CD4-positive, alpha-beta memory T cell (primary cell): ENCODE measurements at regions of chr10 and their contacts with region 1.

Region 1: DNA sequence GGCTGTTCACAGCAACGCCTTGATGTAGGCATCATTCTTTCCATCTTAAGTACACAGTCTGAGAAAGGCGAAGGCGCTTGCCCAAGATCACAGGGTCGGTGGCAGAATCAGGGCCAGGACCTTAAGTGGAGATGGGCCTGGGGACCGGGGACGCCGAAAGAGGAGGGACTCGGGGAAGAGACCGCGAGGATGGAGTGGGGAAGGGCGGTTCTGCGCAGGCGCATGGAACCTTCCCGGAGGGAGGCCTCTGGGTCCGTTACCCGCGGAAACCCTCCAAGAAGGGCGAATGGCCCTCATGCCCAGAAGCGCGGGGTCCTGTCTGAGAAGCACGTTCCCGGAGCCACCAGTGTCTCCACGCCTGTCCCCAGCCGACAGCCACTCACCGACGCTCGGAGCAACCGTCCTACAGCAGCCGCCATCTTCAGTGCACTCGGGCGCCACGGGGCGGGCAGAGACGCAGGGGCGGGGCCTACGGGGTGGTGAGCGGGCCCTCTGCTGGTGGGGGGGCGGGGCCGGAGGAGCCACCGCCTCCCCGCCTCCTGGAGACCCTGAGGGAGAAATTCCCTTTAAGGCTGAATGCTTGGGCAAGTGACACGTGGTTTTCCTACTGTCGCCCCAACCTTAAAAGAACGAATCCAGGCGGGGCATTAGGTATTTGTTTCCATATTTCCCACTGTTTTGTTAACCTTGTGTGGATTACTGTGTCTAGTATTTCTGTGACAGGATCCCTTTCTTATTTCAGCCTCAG is at the start of gene PRDX3:
- DNase-seq: peak; percentile 89 to 92 (median 89)
- H3K4me3 ChIP-seq: peak within 1 kb of the TSS; percentile 96 to 100
- H3K4me3 Mint-ChIP-seq: peak within 1 kb of the TSS; percentile 89 to 99 (median 96)
- H3K27ac ChIP-seq: peak within 1 kb of the TSS; percentile 81
- H3K27ac Mint-ChIP-seq: peak within 1 kb of the TSS; percentile 85 to 98 (median 96)
- H3K4me1 ChIP-seq: peaks cover 44% of the 10 kb centered on the region
- H3K4me1 Mint-ChIP-seq: peaks cover 16 to 51% (median 34%) of the 10 kb centered on the region in 4 donors
- H3K27me3 ChIP-seq: no peaks in the 10 kb centered on the region
- H3K27me3 Mint-ChIP-seq: no peaks in the 10 kb centered on the region
- total RNA-seq, gene PRDX3: 34.3 to 38.2 TPM

Region 2: DNA sequence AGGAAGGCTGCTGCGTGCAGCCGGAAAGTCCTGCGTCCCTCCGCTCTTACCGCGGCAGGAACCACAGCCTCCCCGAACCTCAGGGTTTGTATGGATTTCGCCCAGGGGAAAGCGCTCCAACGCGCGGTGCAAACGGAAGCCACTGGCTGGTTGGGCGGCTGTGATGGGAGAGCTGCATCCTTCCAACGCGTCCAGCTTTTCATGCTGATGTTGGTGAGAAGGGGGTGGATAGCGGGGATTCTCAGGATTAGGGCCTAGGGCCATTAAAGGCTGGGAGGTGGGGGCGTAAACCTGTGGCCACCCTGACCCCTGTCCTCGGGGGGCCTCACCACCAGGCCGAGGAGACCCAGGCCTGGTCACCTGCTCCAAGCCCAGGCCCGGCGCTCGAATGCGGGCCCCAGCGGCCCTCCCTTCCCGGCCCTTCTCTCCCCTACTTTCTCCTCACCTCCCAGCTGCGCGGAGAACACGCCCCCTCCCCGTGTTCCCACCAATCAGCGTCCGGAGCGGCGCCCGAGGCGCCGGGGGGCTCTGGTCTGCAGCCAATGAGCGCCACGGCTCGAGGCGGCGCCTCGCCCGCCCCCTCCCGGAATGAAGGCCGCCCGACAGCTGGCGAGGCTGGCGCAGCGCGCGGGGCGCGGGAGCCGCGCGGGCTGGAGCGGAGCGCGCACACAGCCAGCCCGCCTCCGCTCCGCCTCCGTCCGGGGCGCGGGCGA is 149.5 kb before region 1 on chr10:
- CTCF ChIA-PET with region 1: no interaction called
- POLR2A ChIA-PET with region 1: no interaction called
- intact Hi-C with region 1: loop called (anchors 5 kb)
- DNase-seq: peak; percentile 69 to 84 (median 73)
- H3K4me3 ChIP-seq: peak overlapping the region in 1 of 2 donors; percentile 28
- H3K4me3 Mint-ChIP-seq: peak overlapping the region; percentile 78 to 85 (median 80)
- H3K27ac ChIP-seq: no peak overlapping the region
- H3K27ac Mint-ChIP-seq: peak overlapping the region in 3 of 7 donors; percentile 64 to 73 (median 72)
- H3K4me1 ChIP-seq: peaks cover 7% of the 10 kb centered on the region
- H3K4me1 Mint-ChIP-seq: peaks cover 6 to 30% (median 15%) of the 10 kb centered on the region in 4 donors
- H3K27me3 ChIP-seq: no peaks in the 10 kb centered on the region
- H3K27me3 Mint-ChIP-seq: no peaks in the 10 kb centered on the region

Region 3: GRCh38 chr10:119131512-119132240 is 46.9 kb before region 1 on chr10:
- CTCF ChIA-PET with region 1: no interaction called
- POLR2A ChIA-PET with region 1: interaction called, 3 read pairs
- intact Hi-C with region 1: loop called (anchors 5 kb)
- DNase-seq: peak; percentile 42 to 57 (median 50)
- H3K4me3 ChIP-seq: peak overlapping the region; percentile 3 to 44
- H3K4me3 Mint-ChIP-seq: peak overlapping the region; percentile 87 to 96 (median 92)
- H3K27ac ChIP-seq: peak overlapping the region; percentile 65
- H3K27ac Mint-ChIP-seq: peak overlapping the region; percentile 86 to 99 (median 95)
- H3K4me1 ChIP-seq: peaks cover 40% of the 10 kb centered on the region
- H3K4me1 Mint-ChIP-seq: peaks cover 31 to 49% (median 38%) of the 10 kb centered on the region in 4 donors
- H3K27me3 ChIP-seq: no peaks in the 10 kb centered on the region
- H3K27me3 Mint-ChIP-seq: no peaks in the 10 kb centered on the region